Sigmoid colon (tissue), 7 donors: ENCODE measurements at regions of chr17 and their contacts with region 1.

Region 1: DNA sequence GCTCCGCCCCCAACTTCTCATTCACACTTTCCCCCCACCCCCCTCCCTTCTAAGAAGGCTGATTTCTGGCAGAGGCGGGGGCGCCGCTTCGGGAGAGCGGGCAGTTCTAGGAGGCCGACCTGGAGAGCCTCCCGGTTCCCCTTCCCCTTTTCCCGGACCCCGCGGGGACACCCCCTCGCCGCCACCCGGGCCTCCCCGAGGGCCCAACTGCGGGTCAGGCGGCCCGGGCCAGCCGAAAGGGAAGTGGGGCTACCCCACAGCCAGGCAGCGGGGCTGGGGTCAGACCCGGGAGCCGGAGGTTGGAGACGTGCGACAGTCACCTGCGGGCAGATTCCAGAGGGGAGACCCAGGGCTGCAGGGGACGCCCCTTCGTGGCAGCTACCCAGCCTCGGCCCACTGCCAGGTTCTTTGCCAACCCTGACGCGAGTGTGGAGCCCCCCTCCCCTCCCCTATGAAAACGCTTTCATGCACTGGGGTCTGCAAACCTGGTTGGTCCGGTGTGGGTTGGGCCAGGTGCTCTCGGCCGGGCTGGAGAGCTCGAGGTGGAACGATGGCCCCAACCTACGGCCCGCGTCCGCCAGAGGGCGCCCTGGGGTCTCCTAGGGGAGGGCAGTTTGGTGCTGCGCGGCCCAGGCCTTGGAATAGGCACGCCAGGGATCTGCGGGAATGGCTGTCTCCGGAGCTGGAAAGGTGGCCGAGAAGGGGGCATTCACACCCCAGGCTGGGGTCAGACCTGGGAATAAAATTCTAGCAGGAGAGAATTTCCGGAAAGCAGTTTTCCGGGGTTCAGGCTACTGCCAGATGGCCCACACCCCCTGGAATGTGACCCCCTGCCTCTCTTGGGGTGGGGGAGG is 721 bp upstream of the SOCS3 start:
- DNase-seq: peak; percentile 96
- H3K4me3 ChIP-seq: peak overlapping the region; percentile 33 to 92 (median 80)
- H3K27ac ChIP-seq: peak overlapping the region; percentile 92 to 99 (median 94)
- H3K4me1 ChIP-seq: peaks cover 0 to 48% (median 44%) of the 10 kb centered on the region in 4 donors
- H3K27me3 ChIP-seq: peaks cover 0 to 5% (median 0%) of the 10 kb centered on the region in 3 donors
- CTCF ChIP-seq: peak; percentile 86 to 95 (median 91)
- EP300 ChIP-seq: no peak
- POLR2A ChIP-seq: no peak

Region 2: DNA sequence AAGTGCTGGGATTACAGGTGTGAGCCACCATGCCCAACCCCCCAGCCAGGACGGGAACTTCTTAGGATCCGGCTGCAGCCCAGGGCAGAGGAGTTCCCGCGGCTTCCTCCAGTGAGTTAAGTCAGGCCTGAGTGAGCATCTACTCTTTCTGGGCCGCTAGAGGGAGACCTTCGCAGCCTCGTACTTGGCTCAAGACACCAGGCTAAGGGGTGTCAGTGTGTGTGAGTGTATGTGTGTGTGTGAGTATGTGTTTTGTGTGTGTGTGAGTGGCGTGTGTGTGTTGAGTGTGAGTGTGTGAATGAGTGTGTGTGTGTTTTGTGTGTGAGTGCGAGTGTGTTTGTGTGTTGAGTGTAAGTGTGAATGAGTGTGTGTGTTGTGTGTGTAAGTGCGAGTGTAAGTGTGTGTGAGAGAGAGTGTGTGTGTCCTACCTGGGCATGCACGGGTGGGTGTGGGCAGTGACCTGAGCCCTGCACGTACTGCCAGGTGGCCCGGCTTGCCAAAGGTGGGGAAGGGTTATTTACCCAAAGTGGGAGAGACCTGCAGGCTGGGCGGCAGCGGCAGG is 70.7 kb before region 1 on chr17:
- intact Hi-C with region 1: loop called (anchors 1 kb)
- DNase-seq: peak; percentile 91
- H3K4me3 ChIP-seq: no peak overlapping the region
- H3K27ac ChIP-seq: no peak overlapping the region
- H3K4me1 ChIP-seq: peaks cover 0 to 9% (median 0%) of the 10 kb centered on the region in 4 donors
- H3K27me3 ChIP-seq: no peaks in the 10 kb centered on the region
- CTCF ChIP-seq: peak; percentile 67 to 97 (median 83)
- EP300 ChIP-seq: no peak
- POLR2A ChIP-seq: no peak

Region 3: GRCh38 chr17:78300962-78301822 is 59.4 kb before region 1 on chr17:
- intact Hi-C with region 1: no loop called
- DNase-seq: no peak
- H3K4me3 ChIP-seq: no peak overlapping the region
- H3K27ac ChIP-seq: no peak overlapping the region
- H3K4me1 ChIP-seq: no peaks in the 10 kb centered on the region
- H3K27me3 ChIP-seq: no peaks in the 10 kb centered on the region
- CTCF ChIP-seq: no peak
- EP300 ChIP-seq: no peak
- POLR2A ChIP-seq: no peak

Region 4: GRCh38 chr17:78313735-78314648 is 46.6 kb before region 1 on chr17:
- intact Hi-C with region 1: loop called (anchors 2 kb)
- DNase-seq: peak; percentile 85
- H3K4me3 ChIP-seq: peak overlapping the region; percentile 4 to 62 (median 40)
- H3K27ac ChIP-seq: peak overlapping the region; percentile 44 to 83 (median 72)
- H3K4me1 ChIP-seq: peaks cover 0 to 48% (median 42%) of the 10 kb centered on the region in 4 donors
- H3K27me3 ChIP-seq: no peaks in the 10 kb centered on the region
- CTCF ChIP-seq: no peak
- EP300 ChIP-seq: peak in 2 of 4 donors; percentile 28 to 51
- POLR2A ChIP-seq: no peak

Region 5: GRCh38 chr17:78341559-78342448 is 18.8 kb before region 1 on chr17:
- intact Hi-C with region 1: loop called (anchors 1 kb)
- DNase-seq: peak; percentile 89
- H3K4me3 ChIP-seq: peak overlapping the region; percentile 1 to 52 (median 46)
- H3K27ac ChIP-seq: peak overlapping the region; percentile 90 to 93 (median 92)
- H3K4me1 ChIP-seq: peaks cover 0 to 47% (median 39%) of the 10 kb centered on the region in 4 donors
- H3K27me3 ChIP-seq: no peaks in the 10 kb centered on the region
- CTCF ChIP-seq: no peak
- EP300 ChIP-seq: no peak
- POLR2A ChIP-seq: no peak

Region 6: GRCh38 chr17:78421484-78422266 is 61.1 kb after region 1 on chr17:
- intact Hi-C with region 1: loop called (anchors 2 kb)
- DNase-seq: peak; percentile 88
- H3K4me3 ChIP-seq: no peak overlapping the region
- H3K27ac ChIP-seq: no peak overlapping the region
- H3K4me1 ChIP-seq: peaks cover 0 to 10% (median 8%) of the 10 kb centered on the region in 4 donors
- H3K27me3 ChIP-seq: no peaks in the 10 kb centered on the region
- CTCF ChIP-seq: peak; percentile 91 to 99 (median 97)
- EP300 ChIP-seq: no peak
- POLR2A ChIP-seq: no peak